ENCODE measurements at regions of chr11 and their contacts with region 1.

Region 1: DNA sequence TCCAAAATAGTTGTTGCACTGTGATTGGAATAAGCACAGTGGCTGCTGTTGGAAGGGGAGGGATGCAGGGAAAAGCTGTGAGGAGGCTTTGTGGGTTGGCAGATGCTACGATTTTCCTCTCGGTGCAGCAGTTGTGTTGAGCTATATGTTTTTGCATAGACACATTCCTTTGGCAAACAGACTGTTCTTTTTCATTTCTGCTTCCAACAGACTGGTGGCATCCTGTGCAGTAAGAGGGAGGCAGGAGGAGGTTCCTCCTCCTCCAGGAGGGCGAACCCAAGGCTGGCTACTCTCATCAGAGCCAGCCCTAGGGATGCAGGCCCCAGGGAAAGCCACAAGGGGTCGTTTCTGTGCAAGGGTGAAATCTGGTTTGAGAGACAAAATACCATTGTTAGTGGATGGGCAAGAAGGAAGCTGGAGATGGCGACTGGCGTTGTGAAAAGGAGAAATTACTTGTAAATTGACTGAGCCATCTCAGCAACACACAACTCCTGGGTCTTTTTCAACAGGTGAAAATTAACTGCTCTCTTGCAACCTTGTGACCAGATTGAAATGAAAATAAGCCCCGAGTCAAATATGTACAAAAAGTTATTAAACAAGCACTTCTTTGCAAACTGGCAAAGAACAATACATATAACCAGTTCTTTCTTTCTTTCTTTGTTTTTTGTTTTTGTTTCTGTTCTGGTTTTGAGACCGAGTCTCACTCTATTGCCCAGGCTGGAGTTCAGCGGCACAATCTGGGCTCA is 26.5 kb upstream of the UBASH3B start:
- DNase-seq: peak; percentile 74
- ATAC-seq: peak; percentile 73
- H3K4me3 ChIP-seq: no peak overlapping the region
- H3K4me3 Mint-ChIP-seq: no peak overlapping the region
- H3K27ac ChIP-seq: no peak overlapping the region
- H3K27ac Mint-ChIP-seq: no peak overlapping the region
- H3K4me1 ChIP-seq: no peaks in the 10 kb centered on the region
- H3K4me1 Mint-ChIP-seq: peaks cover 5% of the 10 kb centered on the region
- H3K27me3 ChIP-seq: peaks cover 0 to 4% (median 0%) of the 10 kb centered on the region in 4 experiments
- H3K27me3 Mint-ChIP-seq: peaks cover 12% of the 10 kb centered on the region
- CTCF ChIP-seq: peak; percentile 78

Region 2: GRCh38 chr11:122578168-122578825 is 50.7 kb before region 1 on chr11:
- CTCF ChIA-PET with region 1: interaction called, 6 read pairs
- POLR2A ChIA-PET with region 1: no interaction called
- intact Hi-C with region 1: loop called (anchors 1 kb)
- DNase-seq: no peak
- ATAC-seq: no peak
- H3K4me3 ChIP-seq: no peak overlapping the region
- H3K4me3 Mint-ChIP-seq: no peak overlapping the region
- H3K27ac ChIP-seq: no peak overlapping the region
- H3K27ac Mint-ChIP-seq: no peak overlapping the region
- H3K4me1 ChIP-seq: peaks cover 6 to 9% of the 10 kb centered on the region in 2 donors
- H3K4me1 Mint-ChIP-seq: peaks cover 13% of the 10 kb centered on the region
- H3K27me3 ChIP-seq: no peaks in the 10 kb centered on the region
- H3K27me3 Mint-ChIP-seq: peaks cover 7% of the 10 kb centered on the region
- CTCF ChIP-seq: no peak

Region 3: GRCh38 chr11:122697636-122698167 is 68.7 kb after region 1 on chr11:
- CTCF ChIA-PET with region 1: interaction called, 10 read pairs
- POLR2A ChIA-PET with region 1: no interaction called
- intact Hi-C with region 1: loop called (anchors 5 kb)
- DNase-seq: peak; percentile 71
- ATAC-seq: peak; percentile 90
- H3K4me3 ChIP-seq: peak overlapping the region in 4 of 5 experiments; percentile 3 to 34 (median 18)
- H3K4me3 Mint-ChIP-seq: peak overlapping the region; percentile 83
- H3K27ac ChIP-seq: peak overlapping the region; percentile 14 to 74
- H3K27ac Mint-ChIP-seq: peak overlapping the region; percentile 81
- H3K4me1 ChIP-seq: peaks cover 51 to 59% of the 10 kb centered on the region in 2 donors
- H3K4me1 Mint-ChIP-seq: peaks cover 60% of the 10 kb centered on the region
- H3K27me3 ChIP-seq: peaks cover 0 to under 1% (median 0%) of the 10 kb centered on the region in 4 experiments
- H3K27me3 Mint-ChIP-seq: no peaks in the 10 kb centered on the region
- CTCF ChIP-seq: no peak

Region 4: GRCh38 chr11:122749005-122749687 is 120.2 kb after region 1 on chr11:
- CTCF ChIA-PET with region 1: interaction called, 405 read pairs
- POLR2A ChIA-PET with region 1: interaction called, 3 read pairs
- intact Hi-C with region 1: no loop called
- DNase-seq: peak; percentile 56
- ATAC-seq: peak; percentile 59
- H3K4me3 ChIP-seq: no peak overlapping the region
- H3K4me3 Mint-ChIP-seq: no peak overlapping the region
- H3K27ac ChIP-seq: no peak overlapping the region
- H3K27ac Mint-ChIP-seq: no peak overlapping the region
- H3K4me1 ChIP-seq: peaks cover 40 to 53% of the 10 kb centered on the region in 2 donors
- H3K4me1 Mint-ChIP-seq: peaks cover 18% of the 10 kb centered on the region
- H3K27me3 ChIP-seq: peaks cover 0 to 35% (median 7%) of the 10 kb centered on the region in 4 experiments
- H3K27me3 Mint-ChIP-seq: peaks cover 20% of the 10 kb centered on the region
- CTCF ChIP-seq: no peak

Region 5: DNA sequence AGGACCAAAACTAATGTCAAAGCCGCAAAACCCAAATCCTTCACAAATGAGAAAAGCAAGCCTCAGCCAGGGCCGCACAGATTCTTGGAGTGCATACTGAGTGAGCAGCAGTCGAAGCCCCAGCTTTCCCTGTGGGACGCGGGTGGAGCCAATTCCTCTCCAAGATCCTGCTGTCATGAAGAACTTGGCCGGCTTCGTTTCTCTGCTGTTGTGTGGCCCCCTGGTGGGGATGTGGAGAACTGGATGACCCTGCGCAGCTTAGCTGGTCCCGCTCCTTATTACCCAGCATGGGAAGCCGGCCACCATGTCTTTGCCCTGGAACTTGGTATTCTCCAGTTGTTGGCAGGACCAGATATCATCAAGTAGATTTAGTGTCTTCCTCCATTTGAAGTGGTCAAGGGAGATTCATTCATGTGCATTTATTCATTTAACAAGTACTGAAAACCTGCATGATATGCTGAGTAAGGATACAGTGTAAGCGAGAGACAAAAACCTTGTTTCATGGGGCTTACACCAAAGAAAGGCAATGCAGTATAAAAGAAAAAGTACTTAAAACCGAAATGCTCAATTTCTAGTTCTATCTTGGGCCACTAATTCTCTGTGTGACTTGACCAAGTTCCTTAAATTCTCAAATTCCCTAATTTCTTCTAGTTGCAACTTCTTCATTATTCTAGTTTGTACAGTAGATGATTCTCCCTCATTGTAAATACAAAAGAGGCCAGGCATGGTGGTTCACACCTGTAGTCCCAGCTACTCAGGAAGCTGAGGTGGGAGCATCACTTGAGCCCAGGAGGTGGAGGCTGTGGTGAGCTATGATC is 152.6 kb after region 1 on chr11:
- CTCF ChIA-PET with region 1: interaction called, 240 read pairs
- POLR2A ChIA-PET with region 1: interaction called, 7 read pairs
- intact Hi-C with region 1: loop called (anchors 1 kb)
- DNase-seq: peak; percentile 78
- ATAC-seq: peak; percentile 90
- H3K4me3 ChIP-seq: no peak overlapping the region
- H3K4me3 Mint-ChIP-seq: no peak overlapping the region
- H3K27ac ChIP-seq: no peak overlapping the region
- H3K27ac Mint-ChIP-seq: no peak overlapping the region
- H3K4me1 ChIP-seq: no peaks in the 10 kb centered on the region
- H3K4me1 Mint-ChIP-seq: no peaks in the 10 kb centered on the region
- H3K27me3 ChIP-seq: no peaks in the 10 kb centered on the region
- H3K27me3 Mint-ChIP-seq: no peaks in the 10 kb centered on the region
- CTCF ChIP-seq: peak; percentile 93

Region 6: DNA sequence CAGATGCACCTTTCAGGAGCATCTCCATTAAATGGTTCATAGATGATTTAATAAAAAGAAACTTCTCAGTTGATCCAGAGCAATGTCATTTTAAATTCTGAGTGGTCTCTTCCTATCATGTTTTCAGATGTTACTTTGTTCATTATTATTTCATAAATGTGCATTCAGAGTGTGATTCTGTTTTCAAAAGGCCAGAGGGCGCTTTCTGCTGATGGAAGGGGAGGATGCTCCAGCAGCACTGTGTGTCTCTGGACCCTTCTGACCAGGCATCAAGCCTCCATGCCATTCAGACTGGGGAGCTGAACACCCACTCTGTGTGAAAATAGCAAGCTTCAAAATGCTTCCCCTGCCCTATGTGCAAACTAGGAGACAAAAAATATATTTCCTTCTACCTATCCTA is 185.4 kb after region 1 on chr11:
- CTCF ChIA-PET with region 1: no interaction called
- POLR2A ChIA-PET with region 1: no interaction called
- intact Hi-C with region 1: no loop called
- DNase-seq: no peak
- ATAC-seq: no peak
- H3K4me3 ChIP-seq: no peak overlapping the region
- H3K4me3 Mint-ChIP-seq: no peak overlapping the region
- H3K27ac ChIP-seq: no peak overlapping the region
- H3K27ac Mint-ChIP-seq: no peak overlapping the region
- H3K4me1 ChIP-seq: peaks cover 12 to 14% of the 10 kb centered on the region in 2 donors
- H3K4me1 Mint-ChIP-seq: peaks cover 18% of the 10 kb centered on the region
- H3K27me3 ChIP-seq: no peaks in the 10 kb centered on the region
- H3K27me3 Mint-ChIP-seq: no peaks in the 10 kb centered on the region
- CTCF ChIP-seq: peak; percentile 12

Measured in B cell (primary cell).